Panc1 (cell line): ENCODE measurements at regions of chr13 and their contacts with region 1.

Region 1: GRCh38 chr13:94280349-94280748 is 199.1 kb downstream of the DCT start:
- DNase-seq: no peak
- ATAC-seq: no peak
- H3K4me3 ChIP-seq: no peak overlapping the region
- H3K27ac ChIP-seq: no peak overlapping the region
- H3K4me1 ChIP-seq: no peaks in the 10 kb centered on the region
- H3K27me3 ChIP-seq: no peaks in the 10 kb centered on the region
- CTCF ChIP-seq: no peak

Region 2: DNA sequence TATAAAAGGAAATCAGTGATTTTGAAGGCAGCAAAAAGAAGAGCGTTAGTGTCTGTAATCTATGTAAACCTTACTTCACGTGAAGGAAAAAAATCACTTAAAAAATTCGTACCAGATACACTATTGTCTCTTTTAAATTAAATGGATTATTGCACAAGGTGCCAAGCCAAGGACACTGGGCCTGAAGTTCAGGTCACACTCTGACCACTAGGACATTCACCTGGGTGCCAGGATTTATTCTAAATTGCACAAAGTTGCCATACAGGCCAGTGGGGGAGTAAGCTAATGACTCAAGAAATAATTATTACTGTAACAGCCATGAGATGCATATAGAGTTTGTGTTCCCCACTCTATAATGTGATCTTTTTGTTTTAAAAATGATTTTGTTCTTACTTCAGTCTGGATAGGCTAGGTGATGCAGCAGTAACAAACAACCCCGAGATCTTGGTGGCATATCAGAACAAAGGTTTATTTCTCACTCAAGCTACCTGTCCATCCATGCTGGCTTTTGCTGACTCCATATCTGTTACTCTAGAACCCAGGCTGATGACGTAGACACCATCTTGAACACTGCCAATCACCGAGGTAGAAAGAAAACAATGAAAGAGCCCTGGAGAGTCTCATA is 53.0 kb before region 1 on chr13:
- CTCF ChIA-PET with region 1: no interaction called
- POLR2A ChIA-PET with region 1: no interaction called
- in situ Hi-C with region 1: no loop called
- intact Hi-C with region 1: loop called (anchors 2 kb)
- DNase-seq: no peak
- ATAC-seq: no peak
- H3K4me3 ChIP-seq: no peak overlapping the region
- H3K27ac ChIP-seq: no peak overlapping the region
- H3K4me1 ChIP-seq: no peaks in the 10 kb centered on the region
- H3K27me3 ChIP-seq: no peaks in the 10 kb centered on the region
- CTCF ChIP-seq: no peak

Region 3: GRCh38 chr13:94546061-94546977 is 266.0 kb after region 1 on chr13:
- CTCF ChIA-PET with region 1: no interaction called
- POLR2A ChIA-PET with region 1: no interaction called
- in situ Hi-C with region 1: no loop called
- intact Hi-C with region 1: no loop called
- DNase-seq: no peak
- ATAC-seq: no peak
- H3K4me3 ChIP-seq: no peak overlapping the region
- H3K27ac ChIP-seq: no peak overlapping the region
- H3K4me1 ChIP-seq: peaks cover 4% of the 10 kb centered on the region
- H3K27me3 ChIP-seq: no peaks in the 10 kb centered on the region
- CTCF ChIP-seq: no peak